CD4-positive, alpha-beta memory T cell (primary cell): ENCODE measurements at regions of chr2 and their contacts with region 1.

Region 1: DNA sequence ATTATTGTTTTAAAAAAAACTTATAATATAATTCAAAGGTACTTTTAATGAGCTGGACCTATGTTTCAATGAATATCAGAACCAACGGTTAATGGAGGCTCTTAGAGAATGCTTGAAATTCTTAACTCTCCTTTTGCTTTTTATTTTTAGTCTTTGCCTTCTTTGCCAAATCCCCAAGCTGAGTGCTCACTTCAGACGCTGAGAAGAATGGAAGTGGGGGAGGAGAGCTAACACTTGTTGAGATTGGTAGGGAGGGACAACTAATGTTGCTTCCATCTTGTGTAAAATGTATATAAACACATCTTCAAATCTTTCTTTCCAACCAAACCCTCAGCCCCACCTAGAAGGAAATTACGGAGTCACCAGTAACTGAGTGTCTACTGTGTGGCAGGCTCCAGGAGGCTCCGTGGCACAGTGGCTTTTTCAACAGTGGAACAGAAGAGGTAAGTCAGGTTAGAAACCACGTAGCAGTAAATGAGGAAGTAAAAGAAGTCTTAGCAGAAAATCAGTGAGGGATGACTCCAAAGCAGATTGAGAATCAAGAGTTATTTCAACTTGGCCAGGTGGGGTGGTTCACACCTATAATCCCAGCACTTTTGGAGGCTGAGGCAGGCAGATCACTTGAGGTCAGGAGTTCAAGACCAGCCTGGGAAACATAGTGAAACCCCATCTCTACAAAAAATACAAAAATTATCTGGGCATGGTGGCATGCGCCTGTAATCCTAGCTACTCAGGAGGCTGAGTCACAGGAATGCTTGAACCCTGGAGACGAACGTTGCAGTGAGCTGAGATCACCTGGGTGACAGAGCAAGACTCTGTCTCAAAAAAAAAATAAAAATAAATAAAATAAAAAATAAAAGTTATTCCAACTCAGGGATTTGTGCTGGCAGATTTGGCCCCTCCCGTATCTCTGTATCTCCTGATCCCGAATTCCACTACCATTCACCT is 45.0 kb upstream of the CREB1 start:
- DNase-seq: no peak
- H3K4me3 ChIP-seq: no peak overlapping the region
- H3K4me3 Mint-ChIP-seq: no peak overlapping the region
- H3K27ac ChIP-seq: no peak overlapping the region
- H3K27ac Mint-ChIP-seq: peak overlapping the region in 1 of 7 donors; percentile 55
- H3K4me1 ChIP-seq: peaks cover 12% of the 10 kb centered on the region
- H3K4me1 Mint-ChIP-seq: peaks cover 0 to 16% (median 11%) of the 10 kb centered on the region in 4 donors
- H3K27me3 ChIP-seq: no peaks in the 10 kb centered on the region
- H3K27me3 Mint-ChIP-seq: no peaks in the 10 kb centered on the region

Region 2: GRCh38 chr2:207467716-207468347 is 16.9 kb before region 1 on chr2:
- CTCF ChIA-PET with region 1: no interaction called
- POLR2A ChIA-PET with region 1: no interaction called
- intact Hi-C with region 1: no loop called
- DNase-seq: no peak
- H3K4me3 ChIP-seq: no peak overlapping the region
- H3K4me3 Mint-ChIP-seq: no peak overlapping the region
- H3K27ac ChIP-seq: no peak overlapping the region
- H3K27ac Mint-ChIP-seq: peak overlapping the region in 1 of 7 donors; percentile 0
- H3K4me1 ChIP-seq: no peaks in the 10 kb centered on the region
- H3K4me1 Mint-ChIP-seq: peaks cover 0 to 4% (median 1%) of the 10 kb centered on the region in 4 donors
- H3K27me3 ChIP-seq: no peaks in the 10 kb centered on the region
- H3K27me3 Mint-ChIP-seq: peaks cover 0 to 1% of the 10 kb centered on the region in 2 donors

Region 3: GRCh38 chr2:207499114-207499513 is 14.4 kb after region 1 on chr2:
- CTCF ChIA-PET with region 1: no interaction called
- POLR2A ChIA-PET with region 1: no interaction called
- intact Hi-C with region 1: loop called (anchors 1 kb)
- DNase-seq: no peak
- H3K4me3 ChIP-seq: no peak overlapping the region
- H3K4me3 Mint-ChIP-seq: no peak overlapping the region
- H3K27ac ChIP-seq: no peak overlapping the region
- H3K27ac Mint-ChIP-seq: peak overlapping the region in 1 of 7 donors; percentile 38
- H3K4me1 ChIP-seq: peaks cover 6% of the 10 kb centered on the region
- H3K4me1 Mint-ChIP-seq: peaks cover 3 to 21% (median 6%) of the 10 kb centered on the region in 4 donors
- H3K27me3 ChIP-seq: no peaks in the 10 kb centered on the region
- H3K27me3 Mint-ChIP-seq: no peaks in the 10 kb centered on the region